K562 (cell line): ENCODE measurements at regions of chr11 and their contacts with region 1.

Region 1: DNA sequence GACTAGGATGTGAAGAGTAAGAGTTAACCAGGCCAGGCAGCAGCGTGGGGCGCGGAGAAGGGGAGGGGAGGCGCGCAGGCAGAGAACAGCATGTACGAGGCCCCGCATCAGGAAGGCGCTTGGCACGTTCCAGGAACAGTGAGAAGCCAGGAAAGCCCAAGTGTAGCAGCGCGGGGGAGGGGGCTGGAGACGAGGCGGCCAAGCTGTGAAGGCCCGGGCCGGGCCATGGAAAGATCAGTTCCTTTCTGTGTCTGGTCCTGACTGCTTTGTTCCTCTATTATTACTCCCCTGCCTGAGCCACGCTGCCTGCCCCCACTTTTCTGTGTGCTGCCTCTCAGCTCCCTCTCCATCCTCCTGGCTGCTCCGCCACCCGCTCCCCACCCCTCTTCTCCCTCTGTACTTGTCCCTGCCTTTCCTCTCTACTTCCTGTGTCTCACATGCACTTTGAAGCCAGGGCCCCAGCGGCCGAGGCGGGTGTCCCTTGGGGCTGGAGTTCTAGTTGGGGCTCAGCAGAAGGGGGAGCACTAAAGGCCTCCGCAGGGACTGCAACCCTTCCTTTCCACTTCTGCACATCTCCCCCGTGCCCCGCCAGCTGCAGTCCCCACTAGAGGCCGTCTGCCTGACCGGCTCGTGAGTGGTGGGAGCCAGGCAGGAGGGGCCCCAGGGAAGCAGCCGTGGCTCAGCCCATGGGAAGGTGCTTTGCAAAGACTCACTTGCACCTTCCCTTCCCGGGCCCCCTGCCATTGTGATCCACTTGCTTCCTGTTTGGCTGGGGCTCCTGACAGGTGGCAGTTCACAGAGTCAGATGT is 63.7 kb downstream of the PRDM11 start:
- DNase-seq: no peak
- ATAC-seq: no peak
- H3K4me3 ChIP-seq: no peak overlapping the region
- H3K27ac ChIP-seq: no peak overlapping the region
- H3K4me1 ChIP-seq: peaks cover 0 to 6% of the 10 kb centered on the region in 2 experiments; a peak in 1 of 5 replicates
- H3K27me3 ChIP-seq: peaks cover 8 to 54% of the 10 kb centered on the region in 2 experiments; a peak in 4 of 5 replicates
- CTCF ChIP-seq: no peak
- EP300 ChIP-seq: no peak
- POLR2A ChIP-seq: no peak
- RAD21 ChIP-seq: no peak

Region 2: DNA sequence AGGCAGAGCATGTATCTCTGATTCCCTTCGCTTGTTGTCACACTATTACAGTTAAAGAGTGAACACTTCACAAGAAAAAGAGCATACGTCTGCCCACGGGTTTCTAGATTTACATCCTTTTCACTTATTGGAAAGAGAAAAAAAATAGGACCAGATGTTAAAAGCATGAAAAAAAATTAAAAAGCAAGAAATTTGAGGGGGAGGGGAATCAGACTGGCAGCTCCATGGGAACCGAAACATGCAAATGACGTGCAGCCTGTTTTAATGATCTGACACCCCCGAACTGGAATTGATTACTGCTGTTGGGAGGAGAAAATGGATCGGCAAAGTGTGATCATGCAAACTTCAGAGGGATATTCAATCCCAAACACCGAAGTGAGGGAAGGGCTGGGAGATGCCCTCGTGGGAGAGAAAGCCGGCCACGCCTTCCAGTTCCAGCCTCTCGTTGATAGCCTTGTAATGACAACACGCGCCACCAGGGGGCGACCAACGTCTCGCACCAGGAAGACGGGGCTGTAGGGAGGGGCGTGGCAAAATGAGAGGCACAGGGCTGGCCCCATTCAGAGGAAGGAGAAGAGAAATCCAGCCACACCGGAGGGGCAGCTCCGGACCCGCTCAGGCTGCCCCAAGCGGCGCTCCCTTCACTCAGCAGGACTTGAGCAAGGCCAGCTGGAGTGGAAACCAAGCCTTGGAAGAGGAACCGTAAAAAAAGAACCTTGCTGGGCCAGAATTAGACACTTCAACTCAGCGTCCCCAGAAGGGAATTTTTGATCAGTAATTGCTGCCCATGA is 129.8 kb after region 1 on chr11:
- CTCF ChIA-PET with region 1: no interaction called
- POLR2A ChIA-PET with region 1: no interaction called
- in situ Hi-C with region 1: no loop called
- intact Hi-C with region 1: loop called (anchors 10 kb)
- DNase-seq: peak; percentile 92 to 96 (median 94)
- ATAC-seq: peak; percentile 100
- H3K4me3 ChIP-seq: no peak overlapping the region
- H3K27ac ChIP-seq: no peak overlapping the region
- H3K4me1 ChIP-seq: peaks cover 0 to 5% of the 10 kb centered on the region in 2 experiments; a peak in 2 of 5 replicates
- H3K27me3 ChIP-seq: peaks cover 3 to 18% of the 10 kb centered on the region in 2 experiments; a peak in 4 of 5 replicates
- CTCF ChIP-seq: peak; percentile 86 to 92 (median 90)
- EP300 ChIP-seq: no peak
- POLR2A ChIP-seq: no peak
- RAD21 ChIP-seq: peak; percentile 48 to 64; a peak in 3 of 4 replicates

Region 3: GRCh38 chr11:45354976-45355705 is 145.0 kb after region 1 on chr11:
- CTCF ChIA-PET with region 1: no interaction called
- POLR2A ChIA-PET with region 1: no interaction called
- in situ Hi-C with region 1: no loop called
- intact Hi-C with region 1: no loop called
- DNase-seq: peak; percentile 73 to 83 (median 76)
- ATAC-seq: peak; percentile 95
- H3K4me3 ChIP-seq: peak overlapping the region; percentile 43
- H3K27ac ChIP-seq: no peak overlapping the region
- H3K4me1 ChIP-seq: peaks cover 6 to 7% of the 10 kb centered on the region in 2 experiments; a peak in 3 of 5 replicates
- H3K27me3 ChIP-seq: peaks cover 0 to 2% of the 10 kb centered on the region in 2 experiments; a peak in 2 of 5 replicates
- CTCF ChIP-seq: peak in 1 of 3 experiments; percentile 10; a peak in 2 of 6 replicates
- EP300 ChIP-seq: no peak
- POLR2A ChIP-seq: no peak
- RAD21 ChIP-seq: no peak